ENCODE measurements at regions of chr1 and their contacts with region 1.

Region 1: GRCh38 chr1:165592945-165593823 is 37.9 kb upstream of the MGST3 start:
- DNase-seq: no peak
- ATAC-seq: peak; percentile 69 to 73
- H3K4me3 ChIP-seq: no peak overlapping the region
- H3K27ac ChIP-seq: no peak overlapping the region
- H3K4me1 ChIP-seq: peaks cover 6% of the 10 kb centered on the region
- H3K27me3 ChIP-seq: peaks cover 11% of the 10 kb centered on the region
- CTCF ChIP-seq: peak; percentile 95

Region 2: GRCh38 chr1:165352442-165353293 is 240.5 kb before region 1 on chr1:
- intact Hi-C with region 1: no loop called
- DNase-seq: no peak
- ATAC-seq: peak in 1 of 2 donors; percentile 19
- H3K4me3 ChIP-seq: no peak overlapping the region
- H3K27ac ChIP-seq: no peak overlapping the region
- H3K4me1 ChIP-seq: peaks cover 25% of the 10 kb centered on the region
- H3K27me3 ChIP-seq: peaks cover 99% of the 10 kb centered on the region
- CTCF ChIP-seq: no peak

Region 3: GRCh38 chr1:165397944-165398343 is 195.2 kb before region 1 on chr1:
- intact Hi-C with region 1: loop called (anchors 5 kb)
- DNase-seq: no peak
- ATAC-seq: no peak
- H3K4me3 ChIP-seq: no peak overlapping the region
- H3K27ac ChIP-seq: peak overlapping the region; percentile 32
- H3K4me1 ChIP-seq: peaks cover 19% of the 10 kb centered on the region
- H3K27me3 ChIP-seq: peaks cover 23% of the 10 kb centered on the region
- CTCF ChIP-seq: no peak